K562 (cell line): ENCODE measurements at regions of chr4 and their contacts with region 1.

Region 1: GRCh38 chr4:1167247-1167949 is 5.0 kb downstream of the SPON2 start:
- DNase-seq: peak; percentile 82 to 92 (median 90)
- ATAC-seq: peak; percentile 95
- H3K4me3 ChIP-seq: peak overlapping the region; percentile 61
- H3K27ac ChIP-seq: peak overlapping the region; percentile 71
- H3K4me1 ChIP-seq: peaks cover 5 to 46% of the 10 kb centered on the region in 2 experiments; a peak in 2 of 5 replicates
- H3K27me3 ChIP-seq: no peaks in the 10 kb centered on the region; a peak in 2 of 5 replicates
- CTCF ChIP-seq: peak; percentile 83 to 90 (median 88)
- EP300 ChIP-seq: no peak
- POLR2A ChIP-seq: no peak; the same call in none of the 2 replicates
- RAD21 ChIP-seq: peak; percentile 63 to 84

Region 2: GRCh38 chr4:997375-998071 is 169.9 kb before region 1 on chr4:
- CTCF ChIA-PET with region 1: no interaction called
- POLR2A ChIA-PET with region 1: no interaction called
- in situ Hi-C with region 1: no loop called
- intact Hi-C with region 1: no loop called
- DNase-seq: peak; percentile 76 to 90 (median 87)
- ATAC-seq: peak; percentile 58
- H3K4me3 ChIP-seq: peak overlapping the region; percentile 47
- H3K27ac ChIP-seq: peak overlapping the region; percentile 81
- H3K4me1 ChIP-seq: peaks cover 37 to 76% of the 10 kb centered on the region in 2 experiments
- H3K27me3 ChIP-seq: no peaks in the 10 kb centered on the region
- CTCF ChIP-seq: no peak
- EP300 ChIP-seq: no peak
- POLR2A ChIP-seq: no peak; the same call in 1 of the 2 replicates
- RAD21 ChIP-seq: no peak

Region 3: GRCh38 chr4:1200425-1201035 is 33.1 kb after region 1 on chr4:
- CTCF ChIA-PET with region 1: no interaction called
- POLR2A ChIA-PET with region 1: interaction called, 4 read pairs
- in situ Hi-C with region 1: no loop called
- intact Hi-C with region 1: loop called (anchors 5 kb)
- DNase-seq: peak in 3 of 4 experiments; percentile 21 to 43 (median 41)
- ATAC-seq: peak; percentile 19
- H3K4me3 ChIP-seq: peak overlapping the region; percentile 17; the same call in 1 of the 2 replicates
- H3K27ac ChIP-seq: no peak overlapping the region; the same call in 2 of the 3 replicates
- H3K4me1 ChIP-seq: peaks cover 20 to 49% of the 10 kb centered on the region in 2 experiments
- H3K27me3 ChIP-seq: peaks cover 2 to 11% of the 10 kb centered on the region in 2 experiments; a peak in 2 of 5 replicates
- CTCF ChIP-seq: no peak
- EP300 ChIP-seq: no peak
- POLR2A ChIP-seq: no peak
- RAD21 ChIP-seq: no peak

Region 4: DNA sequence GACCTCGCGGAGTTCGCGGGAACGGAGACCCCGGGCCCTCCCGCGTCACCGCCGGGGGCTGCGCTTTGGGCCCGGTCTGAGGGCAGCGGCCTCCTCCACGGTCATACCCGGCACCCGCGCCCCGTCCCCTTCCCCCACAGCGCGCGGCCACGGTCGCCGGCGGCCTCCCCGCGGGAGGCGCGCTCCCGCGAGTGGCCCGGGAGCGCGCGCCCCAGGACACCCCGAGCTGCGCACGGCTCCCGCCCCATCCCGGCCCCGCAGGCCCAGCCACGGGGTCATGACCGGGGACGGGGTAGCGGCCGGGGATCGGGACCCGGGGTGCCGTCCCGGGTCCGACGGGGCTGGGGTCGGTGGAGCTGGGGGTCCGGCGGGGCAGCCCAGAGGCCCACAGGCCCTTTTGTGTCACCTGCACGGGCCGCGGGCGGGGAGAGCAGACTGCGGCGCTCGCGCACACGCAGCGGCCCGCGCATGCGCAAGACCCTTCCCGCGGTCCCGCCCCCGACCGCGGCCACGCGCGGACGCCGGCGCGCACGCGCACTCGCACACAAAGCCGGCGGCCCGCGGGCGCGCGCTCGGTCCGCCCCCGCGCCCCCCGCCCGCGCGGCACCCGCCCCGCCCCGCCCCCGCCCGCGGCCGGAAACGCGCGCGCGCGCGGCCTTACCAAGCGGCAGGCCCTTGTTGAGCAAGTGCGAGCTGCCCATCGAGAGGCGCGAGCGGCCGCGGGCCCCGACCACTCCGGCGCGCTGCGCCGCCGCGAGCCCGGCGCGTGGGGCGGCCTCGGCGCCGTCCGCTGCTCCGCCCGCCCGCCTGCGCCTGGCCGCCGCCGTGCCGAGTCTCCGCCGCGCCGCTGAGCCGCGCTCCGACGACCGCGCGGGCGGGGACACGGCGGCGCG is 81.1 kb after region 1 on chr4 and contains the start of gene CTBP1:
- CTCF ChIA-PET with region 1: no interaction called
- POLR2A ChIA-PET with region 1: no interaction called
- in situ Hi-C with region 1: no loop called
- intact Hi-C with region 1: loop called (anchors 1 kb)
- DNase-seq: peak; percentile 86 to 99 (median 94)
- ATAC-seq: peak; percentile 71
- H3K4me3 ChIP-seq: peak within 1 kb of the TSS; percentile 86
- H3K27ac ChIP-seq: peak within 1 kb of the TSS; percentile 86
- H3K4me1 ChIP-seq: peaks cover 4 to 73% of the 10 kb centered on the region in 2 experiments; a peak in 4 of 5 replicates
- H3K27me3 ChIP-seq: no peaks in the 10 kb centered on the region
- CTCF ChIP-seq: no peak
- EP300 ChIP-seq: no peak
- POLR2A ChIP-seq: peak; percentile 68
- RAD21 ChIP-seq: no peak
- polyA plus RNA-seq, gene CTBP1: 14.5 to 20.0 TPM

Region 5: DNA sequence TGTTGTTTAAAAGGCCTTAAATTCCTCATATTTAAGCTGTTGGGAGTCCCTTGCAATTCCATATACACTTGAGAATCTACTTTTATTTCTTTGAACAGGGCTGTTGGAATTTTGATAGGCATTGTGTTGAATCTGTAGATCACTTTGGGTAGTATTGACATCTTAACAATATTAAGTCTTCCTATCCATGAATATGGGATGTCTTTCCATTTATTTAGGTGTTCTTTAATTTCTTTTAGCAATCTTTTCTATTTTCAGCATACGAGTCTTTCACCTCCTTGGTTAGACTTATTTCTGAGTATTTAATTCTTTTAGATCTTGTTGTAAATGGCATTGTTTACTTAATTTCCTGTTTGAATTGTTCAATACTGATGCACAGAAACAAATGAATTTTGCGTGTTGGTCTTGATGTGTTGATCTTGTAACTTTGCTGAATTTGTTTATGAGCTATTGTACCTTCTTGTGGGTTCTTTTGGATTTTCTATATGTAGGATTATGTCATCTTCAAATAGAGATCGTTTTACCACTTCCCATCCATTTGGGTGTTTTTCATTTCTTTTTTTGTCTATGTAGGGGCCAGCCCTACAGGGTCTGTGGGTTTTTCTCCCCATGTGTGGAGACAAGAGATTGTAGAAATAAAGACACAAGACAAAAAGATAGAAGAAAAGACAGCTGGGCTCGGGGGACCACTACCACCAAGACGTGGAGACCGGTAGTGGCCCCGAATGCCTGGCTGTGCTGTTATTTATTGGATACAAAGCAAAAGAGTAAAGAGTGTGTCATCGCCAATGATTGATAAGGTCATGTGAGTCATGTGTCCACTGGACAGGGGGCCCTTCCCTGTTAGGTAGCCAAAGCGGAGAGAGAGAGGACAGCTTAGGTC is 99.7 kb after region 1 on chr4:
- CTCF ChIA-PET with region 1: no interaction called
- POLR2A ChIA-PET with region 1: no interaction called
- in situ Hi-C with region 1: no loop called
- intact Hi-C with region 1: loop called (anchors 1 kb)
- DNase-seq: no peak
- ATAC-seq: no peak
- H3K4me3 ChIP-seq: no peak overlapping the region
- H3K27ac ChIP-seq: no peak overlapping the region
- H3K4me1 ChIP-seq: no peaks in the 10 kb centered on the region
- H3K27me3 ChIP-seq: peaks cover 3 to 10% of the 10 kb centered on the region in 2 experiments; a peak in 3 of 5 replicates
- CTCF ChIP-seq: no peak
- EP300 ChIP-seq: no peak
- POLR2A ChIP-seq: no peak
- RAD21 ChIP-seq: no peak

Region 6: GRCh38 chr4:1346781-1347409 is 179.5 kb after region 1 on chr4 and contains the start of gene UVSSA:
- CTCF ChIA-PET with region 1: no interaction called
- POLR2A ChIA-PET with region 1: interaction called, 3 read pairs
- in situ Hi-C with region 1: no loop called
- intact Hi-C with region 1: loop called (anchors 2 kb)
- DNase-seq: peak; percentile 98 to 100 (median 99)
- ATAC-seq: peak; percentile 95
- H3K4me3 ChIP-seq: peak within 1 kb of the TSS; percentile 95
- H3K27ac ChIP-seq: peak within 1 kb of the TSS; percentile 95
- H3K4me1 ChIP-seq: peaks cover 10 to 55% of the 10 kb centered on the region in 2 experiments
- H3K27me3 ChIP-seq: no peaks in the 10 kb centered on the region
- CTCF ChIP-seq: no peak
- EP300 ChIP-seq: no peak
- POLR2A ChIP-seq: peak; percentile 39; the same call in 1 of the 2 replicates
- RAD21 ChIP-seq: no peak
- polyA plus RNA-seq, gene UVSSA: 0.21 to 0.27 TPM